ENCODE measurements at regions of chr2 and their contacts with region 1.

Region 1: GRCh38 chr2:229586746-229587705 is 127.3 kb downstream of the DNER start:
- DNase-seq: peak; percentile 76
- H3K4me3 ChIP-seq: no peak overlapping the region
- H3K27ac ChIP-seq: no peak overlapping the region
- H3K4me1 ChIP-seq: peaks cover 0 to 5% (median 0%) of the 10 kb centered on the region in 6 donors
- H3K27me3 ChIP-seq: peaks cover 0 to 44% (median 0%) of the 10 kb centered on the region in 7 donors
- CTCF ChIP-seq: peak in 10 of 11 experiments; percentile 39 to 79 (median 60)
- POLR2A ChIP-seq: no peak

Region 2: GRCh38 chr2:229133155-229133772 is 453.8 kb before region 1 on chr2:
- intact Hi-C with region 1: loop called (anchors 10 kb)
- DNase-seq: no peak
- H3K4me3 ChIP-seq: no peak overlapping the region
- H3K27ac ChIP-seq: no peak overlapping the region
- H3K4me1 ChIP-seq: no peaks in the 10 kb centered on the region
- H3K27me3 ChIP-seq: no peaks in the 10 kb centered on the region
- CTCF ChIP-seq: peak in 5 of 11 experiments; percentile 12 to 35 (median 23)
- POLR2A ChIP-seq: no peak

Region 3: GRCh38 chr2:229431327-229431954 is 155.6 kb before region 1 on chr2:
- intact Hi-C with region 1: loop called (anchors 10 kb)
- DNase-seq: no peak
- H3K4me3 ChIP-seq: no peak overlapping the region
- H3K27ac ChIP-seq: no peak overlapping the region
- H3K4me1 ChIP-seq: no peaks in the 10 kb centered on the region
- H3K27me3 ChIP-seq: no peaks in the 10 kb centered on the region
- CTCF ChIP-seq: peak in 6 of 11 experiments; percentile 13 to 45 (median 22)
- POLR2A ChIP-seq: no peak

Measured in spleen (tissue), 13 donors.